Activated T-helper 2 cell treated with anti-CD3 and anti-CD28 coated beads, Interferon-gamma antibody, Interleukin-2, Interleukin-4, amounts not matched to agents 10 μg/mL and 5 μg/mL and 100 μg/mL, durations not matched to agents 14 hours and 24 hours and 36 hours (primary cell): ENCODE measurements at regions of chr20 and their contacts with region 1.

Region 1: GRCh38 chr20:9978397-9979004 is 56.3 kb upstream of the ANKEF1 start:
- DNase-seq: peak; percentile 20
- H3K4me3 Mint-ChIP-seq: no peak overlapping the region
- H3K27ac Mint-ChIP-seq: no peak overlapping the region
- H3K4me1 Mint-ChIP-seq: peaks cover 6% of the 10 kb centered on the region
- H3K27me3 Mint-ChIP-seq: peaks cover 9% of the 10 kb centered on the region

Region 2: GRCh38 chr20:9660236-9660868 is 318.1 kb before region 1 on chr20:
- intact Hi-C with region 1: no loop called
- DNase-seq: no peak
- H3K4me3 Mint-ChIP-seq: no peak overlapping the region
- H3K27ac Mint-ChIP-seq: no peak overlapping the region
- H3K4me1 Mint-ChIP-seq: no peaks in the 10 kb centered on the region
- H3K27me3 Mint-ChIP-seq: no peaks in the 10 kb centered on the region

Region 3: GRCh38 chr20:9809271-9809670 is 169.2 kb before region 1 on chr20:
- intact Hi-C with region 1: no loop called
- DNase-seq: no peak
- H3K4me3 Mint-ChIP-seq: no peak overlapping the region
- H3K27ac Mint-ChIP-seq: no peak overlapping the region
- H3K4me1 Mint-ChIP-seq: no peaks in the 10 kb centered on the region
- H3K27me3 Mint-ChIP-seq: no peaks in the 10 kb centered on the region

Region 4: GRCh38 chr20:9919271-9920014 is 59.1 kb before region 1 on chr20:
- intact Hi-C with region 1: no loop called
- DNase-seq: no peak
- H3K4me3 Mint-ChIP-seq: no peak overlapping the region
- H3K27ac Mint-ChIP-seq: no peak overlapping the region
- H3K4me1 Mint-ChIP-seq: no peaks in the 10 kb centered on the region
- H3K27me3 Mint-ChIP-seq: peaks cover 2% of the 10 kb centered on the region

Region 5: DNA sequence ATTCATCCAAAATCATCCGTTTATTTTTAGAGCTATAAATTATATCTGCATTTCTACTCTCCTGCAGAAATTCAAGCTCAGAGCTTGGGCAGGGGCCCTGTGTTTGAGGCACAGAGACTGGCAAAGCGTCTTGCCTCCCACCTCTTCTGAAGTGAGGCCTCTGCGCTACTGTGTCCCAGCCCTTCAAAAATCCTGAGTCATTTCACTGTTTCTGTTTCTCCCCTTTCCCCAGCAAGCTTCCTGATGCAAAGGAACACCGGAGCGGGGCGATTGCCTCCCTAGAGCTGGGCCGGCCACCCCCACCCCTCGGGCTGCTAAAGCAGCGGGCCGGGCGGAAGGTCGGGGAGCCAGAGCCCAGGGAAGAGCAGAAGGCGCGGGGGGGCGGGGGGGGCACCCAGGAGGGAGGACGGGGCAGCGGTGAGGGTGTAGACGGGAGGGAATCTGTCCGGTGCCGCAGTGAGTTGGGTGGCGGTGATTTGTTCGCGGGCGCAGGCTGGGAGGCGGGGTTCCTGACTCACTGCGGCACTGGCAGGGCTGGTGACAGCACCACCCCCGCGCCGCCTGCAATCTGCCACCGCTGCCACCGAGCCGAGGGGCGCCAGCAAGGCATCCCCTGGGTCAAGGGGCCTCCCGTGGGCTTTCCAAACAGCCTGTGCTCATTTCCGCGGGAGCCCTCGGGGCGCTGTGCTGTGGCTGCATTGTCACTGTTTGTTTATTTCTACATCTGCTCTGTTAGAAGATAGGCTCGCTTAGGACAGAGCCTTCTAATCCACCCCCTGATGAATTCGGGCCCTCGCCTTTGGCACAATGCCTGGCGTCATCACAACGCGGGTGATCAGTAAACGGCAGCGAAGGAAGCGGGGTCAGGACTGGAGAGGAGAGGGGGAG is 193.6 kb after region 1 on chr20:
- intact Hi-C with region 1: loop called (anchors 5 kb)
- DNase-seq: no peak
- H3K4me3 Mint-ChIP-seq: peak overlapping the region; percentile 79
- H3K27ac Mint-ChIP-seq: peak overlapping the region; percentile 53
- H3K4me1 Mint-ChIP-seq: peaks cover 7% of the 10 kb centered on the region
- H3K27me3 Mint-ChIP-seq: peaks cover 29% of the 10 kb centered on the region

Region 6: DNA sequence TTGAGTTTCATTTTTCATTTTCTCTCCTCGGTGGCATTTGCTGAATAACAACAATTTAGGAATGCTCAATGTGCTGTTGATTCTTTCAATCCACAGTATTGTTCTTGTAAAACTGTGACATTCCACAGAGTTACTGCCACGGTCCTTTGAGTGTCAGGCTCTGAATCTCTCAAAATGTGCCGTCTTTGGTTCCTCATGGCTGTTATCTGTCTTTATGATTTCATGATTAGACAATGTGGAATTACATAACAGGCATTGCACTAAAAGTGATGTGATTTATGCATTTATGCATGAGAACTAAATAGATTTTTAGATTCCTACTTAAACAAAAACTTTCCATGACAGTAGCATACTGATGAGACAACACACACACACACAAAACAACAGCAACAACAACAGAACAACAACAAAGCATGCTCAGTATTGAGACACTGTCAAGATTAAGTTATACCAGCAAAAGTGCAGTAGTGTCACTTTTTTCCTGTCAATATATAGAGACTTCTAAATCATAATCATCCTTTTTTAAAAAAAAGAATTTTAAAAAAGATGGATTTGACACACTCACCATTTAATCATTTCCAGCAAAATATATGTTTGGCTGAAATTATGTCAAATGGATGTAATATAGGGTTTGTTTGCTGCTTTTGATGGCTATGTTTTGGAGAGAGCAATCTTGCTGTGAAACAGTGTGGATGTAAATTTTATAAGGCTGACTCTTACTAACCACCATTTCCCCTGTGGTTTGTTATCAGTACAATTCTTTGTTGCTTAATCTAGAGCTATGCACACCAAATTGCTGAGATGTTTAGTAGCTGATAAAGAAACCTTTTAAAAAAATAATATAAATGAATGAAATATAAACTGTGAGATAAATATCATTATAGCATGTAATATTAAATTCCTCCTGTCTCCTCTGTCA is 328.2 kb after region 1 on chr20:
- intact Hi-C with region 1: loop called (anchors 5 kb)
- DNase-seq: no peak
- H3K4me3 Mint-ChIP-seq: no peak overlapping the region
- H3K27ac Mint-ChIP-seq: no peak overlapping the region
- H3K4me1 Mint-ChIP-seq: peaks cover 24% of the 10 kb centered on the region
- H3K27me3 Mint-ChIP-seq: peaks cover 51% of the 10 kb centered on the region

Region 7: DNA sequence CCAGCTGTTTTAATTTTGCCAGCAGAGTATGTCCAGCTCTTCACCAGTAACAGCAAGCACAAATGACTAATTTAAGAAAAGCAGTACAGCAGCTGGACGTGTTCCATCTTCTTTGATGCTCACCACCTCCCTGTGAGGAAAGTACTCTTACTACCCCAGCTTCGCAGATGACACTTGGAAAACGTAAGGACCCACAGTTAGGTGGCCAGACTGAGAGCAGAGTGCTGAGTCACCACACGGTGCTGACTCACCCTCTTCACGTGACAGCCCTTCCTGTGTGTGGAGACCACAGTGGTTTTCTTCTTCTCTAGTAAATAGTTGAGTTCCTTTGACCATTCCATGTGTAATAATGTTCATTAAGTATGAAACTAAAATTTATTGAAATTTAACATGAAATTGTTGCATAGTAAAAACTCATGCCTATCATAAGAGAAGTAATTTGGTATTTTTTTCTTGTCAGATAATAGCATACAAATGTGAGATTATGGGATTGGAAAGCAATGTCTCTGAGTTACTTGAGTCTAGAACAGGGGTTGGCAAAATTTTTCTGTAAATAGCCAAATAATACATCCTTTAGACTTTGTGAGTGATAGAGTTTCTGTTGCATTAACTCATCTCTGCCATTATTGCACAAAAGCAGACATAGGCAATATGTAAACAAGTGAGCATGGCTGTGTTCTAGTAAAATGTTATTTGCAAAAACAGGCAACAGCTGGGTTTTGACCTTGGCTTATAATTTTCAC is 533.2 kb after region 1 on chr20:
- intact Hi-C with region 1: loop called (anchors 10 kb)
- DNase-seq: peak; percentile 67
- H3K4me3 Mint-ChIP-seq: peak overlapping the region; percentile 9
- H3K27ac Mint-ChIP-seq: peak overlapping the region; percentile 75
- H3K4me1 Mint-ChIP-seq: peaks cover 57% of the 10 kb centered on the region
- H3K27me3 Mint-ChIP-seq: no peaks in the 10 kb centered on the region

Region 8: DNA sequence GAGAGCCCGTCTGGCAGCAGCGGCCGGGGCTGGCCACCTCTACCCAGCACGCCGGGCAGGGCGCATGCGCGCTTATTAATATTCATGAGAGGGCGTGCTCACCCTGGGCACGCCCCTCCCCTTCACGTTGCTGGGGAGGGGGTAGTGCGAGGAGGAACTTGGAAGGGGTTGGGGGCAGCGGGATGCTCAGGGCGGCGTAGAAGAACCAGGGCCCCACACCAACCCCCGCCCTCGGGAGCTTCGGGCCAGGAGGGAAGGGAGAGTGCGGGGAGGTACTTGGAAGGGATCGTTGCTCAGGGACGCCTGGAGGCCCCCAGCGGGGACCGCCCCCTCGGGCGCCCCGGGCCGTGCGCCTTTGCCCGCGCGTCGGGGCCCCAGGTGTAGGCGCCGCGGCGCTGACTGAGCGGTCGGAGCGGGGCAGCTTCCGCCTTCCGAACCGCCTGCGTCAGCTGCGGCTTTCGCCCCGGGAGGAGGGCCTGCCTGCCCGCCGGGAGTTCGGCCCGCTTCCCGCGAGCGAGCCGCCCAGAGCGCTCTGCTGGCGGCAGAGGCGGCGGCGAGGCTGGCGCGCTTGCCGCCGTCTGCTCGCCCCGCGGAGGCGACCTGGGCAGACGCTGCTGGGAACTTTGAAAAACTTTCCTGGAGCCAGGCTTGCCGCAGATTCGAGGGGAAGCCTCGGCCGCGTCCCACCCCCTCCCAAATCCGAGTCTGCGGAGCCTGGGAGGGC is 695.6 kb after region 1 on chr20 and contains the start of gene JAG1:
- intact Hi-C with region 1: loop called (anchors 10 kb)
- DNase-seq: peak; percentile 78
- H3K4me3 Mint-ChIP-seq: peak within 1 kb of the TSS; percentile 92
- H3K27ac Mint-ChIP-seq: peak within 1 kb of the TSS; percentile 87
- H3K4me1 Mint-ChIP-seq: peaks cover 30% of the 10 kb centered on the region
- H3K27me3 Mint-ChIP-seq: peaks cover 68% of the 10 kb centered on the region
- total RNA-seq, gene JAG1: 2.8 and 3.1 TPM in 2 replicates